HepG2 (cell line): ENCODE measurements at regions of chr2 and their contacts with region 1.

Region 1: DNA sequence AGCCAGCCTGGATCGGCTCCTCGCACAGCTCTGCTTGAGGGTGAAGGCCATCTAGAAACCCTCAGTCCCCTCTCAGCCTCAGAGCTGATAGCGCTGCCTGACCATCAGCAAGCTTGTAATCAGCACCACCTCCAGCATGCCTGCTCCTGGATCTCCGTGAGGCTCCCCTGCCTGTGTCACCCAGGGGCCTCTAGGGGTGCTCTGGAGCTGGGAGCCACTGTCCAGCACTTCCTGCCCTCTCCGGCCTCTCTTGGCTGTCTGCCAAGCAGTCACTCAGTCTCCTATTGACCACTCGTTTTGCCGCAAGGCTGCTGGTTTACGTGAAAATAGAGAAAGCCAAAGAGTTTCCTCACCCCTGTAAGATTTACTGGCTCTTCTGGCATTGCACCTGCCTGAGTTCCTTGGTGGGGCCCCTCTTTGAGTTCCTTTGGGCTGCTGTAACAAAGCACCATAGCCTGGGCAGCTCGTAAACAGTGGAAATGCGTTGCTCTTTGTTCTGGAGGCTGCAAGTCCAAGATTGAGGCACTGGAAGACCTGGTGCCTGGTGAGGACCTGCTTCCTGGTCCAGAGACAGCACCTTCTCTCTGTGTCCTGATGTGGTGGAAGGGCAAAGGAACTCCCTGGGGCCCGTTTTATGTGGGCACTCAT is 17.9 kb downstream of the CAPN10 start:
- DNase-seq: peak; percentile 96
- ATAC-seq: peak; percentile 90
- H3K4me3 ChIP-seq: peak overlapping the region; percentile 66 to 74 (median 68)
- H3K27ac ChIP-seq: peak overlapping the region; percentile 91
- H3K4me1 ChIP-seq: peaks cover 70% of the 10 kb centered on the region
- H3K27me3 ChIP-seq: no peaks in the 10 kb centered on the region
- CTCF ChIP-seq: peak; percentile 97
- EP300 ChIP-seq: peak; percentile 51 to 69; a peak in 2 of 4 replicates
- POLR2A ChIP-seq: peak in 1 of 2 experiments; percentile 55; a peak in 1 of 4 replicates
- RAD21 ChIP-seq: peak; percentile 88

Region 2: DNA sequence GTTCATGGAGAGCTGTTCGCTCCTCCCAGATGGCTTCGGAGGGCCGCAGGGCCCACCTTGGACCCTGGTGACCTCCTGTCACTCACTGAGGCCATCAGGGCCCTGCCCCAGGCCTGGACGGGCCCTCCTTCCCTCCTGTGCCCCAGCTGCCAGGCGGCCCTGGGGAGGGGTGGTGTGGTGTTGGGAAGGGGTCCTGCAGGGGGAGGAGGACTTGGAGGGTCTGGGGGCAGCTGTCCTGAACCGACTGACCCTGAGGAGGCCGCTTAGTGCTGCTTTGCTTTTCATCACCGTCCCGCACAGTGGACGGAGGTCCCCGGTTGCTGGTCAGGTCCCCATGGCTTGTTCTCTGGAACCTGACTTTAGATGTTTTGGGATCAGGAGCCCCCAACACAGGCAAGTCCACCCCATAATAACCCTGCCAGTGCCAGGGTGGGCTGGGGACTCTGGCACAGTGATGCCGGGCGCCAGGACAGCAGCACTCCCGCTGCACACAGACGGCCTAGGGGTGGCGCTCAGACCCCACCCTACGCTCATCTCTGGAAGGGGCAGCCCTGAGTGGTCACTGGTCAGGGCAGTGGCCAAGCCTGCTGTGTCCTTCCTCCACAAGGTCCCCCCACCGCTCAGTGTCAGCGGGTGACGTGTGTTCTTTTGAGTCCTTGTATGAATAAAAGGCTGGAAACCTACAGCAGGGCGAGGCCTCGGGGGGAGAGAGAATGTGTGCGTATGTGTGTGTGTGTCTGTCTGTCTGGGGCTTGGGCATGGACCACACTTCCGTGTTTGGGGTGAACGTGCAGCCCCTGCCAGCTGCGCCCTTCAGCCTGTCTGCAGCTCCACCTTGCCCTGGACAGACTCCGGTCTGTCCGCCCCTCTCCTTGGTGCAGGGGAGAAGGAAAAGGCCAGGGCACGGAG is 136.8 kb before region 1 on chr2:
- CTCF ChIA-PET with region 1: no interaction called
- POLR2A ChIA-PET with region 1: no interaction called
- in situ Hi-C with region 1: no loop called
- intact Hi-C with region 1: no loop called
- DNase-seq: no peak
- ATAC-seq: no peak
- H3K4me3 ChIP-seq: no peak overlapping the region
- H3K27ac ChIP-seq: no peak overlapping the region
- H3K4me1 ChIP-seq: peaks cover 12% of the 10 kb centered on the region; the same call in 1 of the 2 replicates
- H3K27me3 ChIP-seq: no peaks in the 10 kb centered on the region
- CTCF ChIP-seq: peak; percentile 29
- EP300 ChIP-seq: no peak
- POLR2A ChIP-seq: no peak
- RAD21 ChIP-seq: no peak

Region 3: GRCh38 chr2:240560480-240561326 is 43.7 kb before region 1 on chr2:
- CTCF ChIA-PET with region 1: interaction called, 4 read pairs
- POLR2A ChIA-PET with region 1: interaction called, 45 read pairs
- in situ Hi-C with region 1: no loop called
- intact Hi-C with region 1: no loop called
- DNase-seq: peak; percentile 97
- ATAC-seq: peak; percentile 76
- H3K4me3 ChIP-seq: peak overlapping the region; percentile 80 to 85 (median 80)
- H3K27ac ChIP-seq: peak overlapping the region; percentile 90
- H3K4me1 ChIP-seq: peaks cover 54% of the 10 kb centered on the region
- H3K27me3 ChIP-seq: no peaks in the 10 kb centered on the region
- CTCF ChIP-seq: peak; percentile 51
- EP300 ChIP-seq: peak in 1 of 2 experiments; percentile 45; a peak in 1 of 4 replicates
- POLR2A ChIP-seq: peak in 1 of 2 experiments; percentile 98; a peak in 2 of 4 replicates
- RAD21 ChIP-seq: peak; percentile 81

Region 4: DNA sequence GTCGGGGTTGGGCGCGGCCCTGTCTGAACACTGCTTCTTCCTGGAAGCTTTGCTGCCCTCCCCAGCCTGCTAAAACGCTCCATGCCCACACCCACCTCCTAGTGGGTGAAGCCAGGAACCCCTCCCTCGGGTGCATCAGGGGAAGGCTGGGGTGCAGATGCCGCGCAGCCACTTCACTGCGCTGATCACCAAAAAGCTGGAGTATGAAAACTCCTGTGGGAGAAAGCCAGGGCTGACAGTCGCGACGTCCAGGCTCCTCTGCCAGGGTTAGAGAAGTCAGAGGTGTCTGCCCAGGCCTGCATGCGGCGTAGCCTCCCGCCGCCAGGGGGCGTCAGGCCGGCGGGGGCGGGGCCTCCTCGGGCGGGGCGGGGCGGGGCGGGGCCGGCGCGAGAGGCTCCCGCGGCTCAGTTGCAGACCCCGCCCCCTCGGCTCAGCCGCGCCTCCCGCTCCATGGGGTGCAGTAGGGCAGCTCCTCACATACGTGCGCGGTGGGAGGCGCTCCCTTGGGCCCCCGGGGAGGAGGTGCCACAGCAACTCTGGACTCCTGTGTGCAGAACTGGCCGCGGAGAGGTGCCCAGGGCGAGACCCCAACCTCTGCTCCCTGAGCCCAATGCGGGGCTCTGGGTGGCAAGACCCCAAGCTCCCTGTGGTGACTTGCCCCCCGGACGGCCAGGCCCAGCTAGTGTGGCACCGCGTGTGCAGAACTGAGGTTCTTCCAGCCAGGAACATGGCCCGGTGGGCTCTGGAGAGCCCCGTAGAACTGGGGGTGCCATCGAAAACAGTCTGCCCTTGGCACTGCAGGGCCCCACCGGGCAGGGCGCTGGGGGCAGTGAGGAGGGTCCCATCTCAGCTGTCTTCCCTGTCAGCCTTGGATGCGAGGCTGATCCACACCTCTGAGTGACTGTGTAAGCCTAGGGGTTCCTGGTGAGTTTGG is 37.9 kb before region 1 on chr2:
- CTCF ChIA-PET with region 1: interaction called, 4 read pairs
- POLR2A ChIA-PET with region 1: interaction called, 45 read pairs
- in situ Hi-C with region 1: no loop called
- intact Hi-C with region 1: no loop called
- DNase-seq: peak; percentile 92
- ATAC-seq: peak; percentile 83
- H3K4me3 ChIP-seq: peak overlapping the region; percentile 71 to 89 (median 71)
- H3K27ac ChIP-seq: peak overlapping the region; percentile 71
- H3K4me1 ChIP-seq: peaks cover 57% of the 10 kb centered on the region
- H3K27me3 ChIP-seq: no peaks in the 10 kb centered on the region; a peak in 1 of 5 replicates
- CTCF ChIP-seq: peak; percentile 81
- EP300 ChIP-seq: no peak
- POLR2A ChIP-seq: peak in 1 of 2 experiments; percentile 56; a peak in 2 of 4 replicates
- RAD21 ChIP-seq: peak; percentile 10

Region 5: DNA sequence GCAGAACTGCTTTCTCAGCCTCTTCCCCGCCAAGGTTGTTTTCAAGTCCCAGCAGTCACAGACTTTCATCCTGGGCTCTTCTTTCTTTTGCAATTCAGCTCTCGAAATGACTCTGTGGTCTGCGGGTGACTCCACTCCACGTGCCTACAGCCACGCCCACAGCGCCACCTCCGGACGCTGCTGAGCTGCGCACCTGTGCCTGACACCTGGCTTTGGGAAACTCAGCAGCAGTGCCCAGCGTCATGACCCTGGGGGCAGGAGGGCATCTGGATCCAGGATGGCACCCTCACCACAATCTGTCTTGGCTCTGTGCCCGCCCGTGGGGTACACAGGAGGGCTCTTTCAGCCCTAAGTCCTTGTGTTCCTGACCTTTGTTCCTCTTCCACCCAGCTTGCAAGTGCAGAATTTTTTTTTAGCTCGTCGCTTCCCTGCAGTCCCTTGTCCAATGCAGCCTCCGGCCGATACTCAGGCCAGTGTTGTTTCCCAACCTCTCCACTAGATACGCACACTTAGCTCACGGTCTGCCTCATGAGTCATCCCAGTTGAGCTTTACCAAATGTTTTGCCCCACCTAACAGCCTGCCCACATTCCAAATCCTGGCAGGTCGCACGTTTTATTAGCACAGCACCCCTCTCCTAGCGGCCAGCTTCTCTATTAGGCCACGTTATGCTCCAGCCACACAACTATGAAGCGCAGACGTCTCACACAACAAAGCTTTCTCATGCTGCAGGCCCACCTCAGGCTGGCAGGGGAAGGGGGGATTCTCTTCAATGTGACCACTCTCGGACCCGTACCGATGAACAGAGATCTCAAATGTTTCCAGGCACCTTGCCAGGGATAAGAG is 24.4 kb before region 1 on chr2:
- CTCF ChIA-PET with region 1: interaction called, 7 read pairs
- POLR2A ChIA-PET with region 1: interaction called, 147 read pairs
- in situ Hi-C with region 1: no loop called
- intact Hi-C with region 1: no loop called
- DNase-seq: peak; percentile 96
- ATAC-seq: peak; percentile 83
- H3K4me3 ChIP-seq: peak overlapping the region; percentile 33 to 63 (median 44)
- H3K27ac ChIP-seq: peak overlapping the region; percentile 80
- H3K4me1 ChIP-seq: peaks cover 61% of the 10 kb centered on the region
- H3K27me3 ChIP-seq: no peaks in the 10 kb centered on the region; a peak in 1 of 5 replicates
- CTCF ChIP-seq: peak; percentile 91
- EP300 ChIP-seq: peak in 1 of 2 experiments; percentile 24; a peak in 2 of 4 replicates
- POLR2A ChIP-seq: peak in 1 of 2 experiments; percentile 48; a peak in 2 of 4 replicates
- RAD21 ChIP-seq: peak; percentile 49

Region 6: GRCh38 chr2:240586198-240586918 is 18.1 kb before region 1 on chr2 and contains the start of gene CAPN10:
- CTCF ChIA-PET with region 1: interaction called, 5 read pairs
- POLR2A ChIA-PET with region 1: interaction called, 147 read pairs
- in situ Hi-C with region 1: no loop called
- intact Hi-C with region 1: loop called (anchors 1 kb)
- DNase-seq: peak; percentile 94
- ATAC-seq: peak; percentile 92
- H3K4me3 ChIP-seq: peak within 1 kb of the TSS; percentile 83 to 90 (median 88)
- H3K27ac ChIP-seq: peak within 1 kb of the TSS; percentile 89
- H3K4me1 ChIP-seq: peaks cover 59% of the 10 kb centered on the region
- H3K27me3 ChIP-seq: peaks cover 0 to 4% of the 10 kb centered on the region in 2 experiments; a peak in 1 of 5 replicates
- CTCF ChIP-seq: no peak; the same call in 1 of the 2 replicates
- EP300 ChIP-seq: peak; percentile 31 to 53; a peak in 1 of 4 replicates
- POLR2A ChIP-seq: peak in 1 of 2 experiments; percentile 81; a peak in 2 of 4 replicates
- RAD21 ChIP-seq: no peak; the same call in none of the 2 replicates
- total RNA-seq, gene CAPN10: 16.5 and 32.4 TPM in 2 replicates

Region 7: DNA sequence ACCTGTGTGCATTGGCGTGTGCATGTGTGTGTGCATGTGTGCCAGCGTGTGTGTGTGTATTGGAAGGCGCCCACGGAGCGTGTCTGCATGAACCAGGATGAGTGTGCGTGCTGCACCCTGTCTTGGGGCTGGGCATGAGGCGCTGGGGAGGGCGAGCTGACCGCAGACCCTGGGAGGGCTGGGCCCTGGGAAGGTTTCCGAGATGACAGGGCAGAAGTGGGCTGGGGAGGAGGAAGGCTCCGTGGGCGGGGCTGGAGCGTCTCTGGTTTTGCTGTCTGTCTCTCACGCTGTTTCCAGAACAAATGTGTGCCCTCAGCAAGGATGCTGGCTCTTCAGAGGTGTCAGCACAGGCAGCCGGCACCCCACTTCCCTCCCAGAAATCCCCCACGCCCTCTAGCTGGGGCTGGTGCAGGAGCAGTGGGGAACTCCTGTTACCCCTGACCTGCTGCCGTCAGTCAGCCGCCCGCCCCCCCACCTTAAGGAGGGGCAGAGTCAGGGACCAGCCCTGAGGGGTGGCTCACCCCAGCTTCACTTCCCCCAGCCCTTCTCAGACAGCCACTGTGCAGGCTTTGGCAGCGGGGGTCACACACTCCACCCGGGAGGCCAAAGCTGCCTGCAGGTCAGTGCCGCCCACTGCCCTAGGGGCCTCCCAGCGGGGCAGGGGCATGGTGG is 20.7 kb after region 1 on chr2 and contains the start of gene GPR35:
- CTCF ChIA-PET with region 1: interaction called, 3 read pairs
- POLR2A ChIA-PET with region 1: interaction called, 46 read pairs
- in situ Hi-C with region 1: no loop called
- intact Hi-C with region 1: no loop called
- DNase-seq: no peak
- ATAC-seq: no peak
- H3K4me3 ChIP-seq: peak within 1 kb of the TSS in 1 of 3 experiments; percentile 51; a peak in 1 of 6 replicates
- H3K27ac ChIP-seq: peak within 1 kb of the TSS; percentile 92
- H3K4me1 ChIP-seq: peaks cover 47% of the 10 kb centered on the region
- H3K27me3 ChIP-seq: no peaks in the 10 kb centered on the region; a peak in 1 of 5 replicates
- CTCF ChIP-seq: no peak
- EP300 ChIP-seq: no peak
- POLR2A ChIP-seq: no peak; a peak in 1 of 4 replicates
- RAD21 ChIP-seq: no peak
- total RNA-seq, gene GPR35: 21.6 and 27.1 TPM in 2 replicates

Region 8: DNA sequence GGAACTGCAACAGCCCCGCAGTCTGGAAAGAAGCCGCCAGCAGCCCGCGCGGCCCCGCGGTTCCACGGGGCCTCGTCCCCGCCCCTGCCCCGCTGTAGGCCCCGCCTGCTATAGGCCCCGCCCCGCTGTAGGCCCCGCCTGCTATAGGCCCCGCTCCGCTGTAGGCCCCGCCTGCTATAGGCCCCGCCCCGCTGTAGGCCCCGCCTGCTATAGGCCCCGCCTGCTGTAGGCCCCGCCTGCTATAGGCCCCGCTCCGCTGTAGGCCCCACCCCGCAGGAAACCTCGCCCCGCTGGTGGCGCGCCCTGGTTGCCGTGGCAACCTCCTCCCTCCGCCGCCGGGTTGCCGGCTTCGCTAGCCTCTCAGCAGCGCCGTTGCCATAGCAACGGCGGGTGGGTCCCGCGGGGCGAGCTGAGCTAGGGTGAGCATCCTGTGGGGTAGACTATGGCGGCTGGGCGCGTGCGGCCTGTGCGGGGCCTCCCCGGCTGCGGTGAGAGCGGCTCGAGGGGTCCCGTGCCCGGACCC is 227.9 kb after region 1 on chr2:
- CTCF ChIA-PET with region 1: no interaction called
- POLR2A ChIA-PET with region 1: no interaction called
- in situ Hi-C with region 1: no loop called
- intact Hi-C with region 1: loop called (anchors 10 kb)
- DNase-seq: peak; percentile 85
- ATAC-seq: peak; percentile 85
- H3K4me3 ChIP-seq: peak overlapping the region in 2 of 3 experiments; percentile 19 to 57; a peak in 2 of 6 replicates
- H3K27ac ChIP-seq: no peak overlapping the region
- H3K4me1 ChIP-seq: peaks cover 7% of the 10 kb centered on the region
- H3K27me3 ChIP-seq: peaks cover 2 to 59% of the 10 kb centered on the region in 2 experiments
- CTCF ChIP-seq: no peak
- EP300 ChIP-seq: no peak
- POLR2A ChIP-seq: no peak
- RAD21 ChIP-seq: no peak